Lower leg skin (tissue), 4 donors: ENCODE measurements at regions of chr20 and their contacts with region 1.

Region 1: GRCh38 chr20:20571068-20571780 is 141.2 kb downstream of the RALGAPA2 start:
- DNase-seq: no peak
- H3K4me3 ChIP-seq: no peak overlapping the region
- CTCF ChIP-seq: no peak
- POLR2A ChIP-seq: no peak

Region 2: DNA sequence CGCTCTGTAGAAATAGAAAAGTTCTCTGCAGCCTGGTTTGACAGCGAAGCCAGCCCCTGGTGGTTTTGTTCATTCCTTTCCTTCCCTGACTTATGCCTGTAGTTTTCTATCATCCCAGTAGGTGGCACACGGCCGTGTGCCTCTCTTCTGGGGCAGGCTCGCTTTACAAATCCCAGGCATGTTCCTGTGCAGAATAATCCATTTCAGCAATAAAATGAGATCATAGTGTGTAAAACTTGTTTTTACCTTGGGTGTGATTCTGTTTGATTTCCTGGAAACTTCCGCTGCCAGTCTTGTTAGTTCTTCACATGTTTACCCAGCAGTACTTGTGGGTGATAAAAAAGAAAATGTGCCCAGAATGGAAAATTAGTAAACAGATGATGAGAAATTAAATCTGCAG is 210.8 kb before region 1 on chr20:
- intact Hi-C with region 1: loop called (anchors 10 kb)
- DNase-seq: no peak
- H3K4me3 ChIP-seq: no peak overlapping the region
- CTCF ChIP-seq: no peak
- POLR2A ChIP-seq: no peak

Region 3: GRCh38 chr20:20489054-20489453 is 82.2 kb before region 1 on chr20:
- intact Hi-C with region 1: no loop called
- DNase-seq: no peak
- H3K4me3 ChIP-seq: no peak overlapping the region
- CTCF ChIP-seq: no peak
- POLR2A ChIP-seq: no peak

Region 4: DNA sequence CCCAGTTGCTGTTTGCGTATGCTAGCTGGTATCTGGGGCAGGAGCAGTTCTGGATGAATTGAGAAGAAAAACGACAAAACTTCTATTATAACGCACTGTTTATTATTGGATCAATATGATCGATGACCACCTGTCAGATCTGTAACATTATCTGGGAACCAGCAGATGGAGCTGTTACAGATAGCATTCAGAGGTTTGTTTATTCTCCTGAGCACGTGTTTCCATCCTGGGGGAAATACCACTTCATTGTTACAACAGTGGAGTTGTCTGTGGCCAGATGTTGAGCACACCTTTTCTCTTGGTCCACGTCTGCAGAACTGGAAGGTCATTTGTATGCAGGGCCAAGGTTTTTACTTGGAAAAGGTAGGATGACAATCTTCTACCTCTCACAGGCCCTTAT is 958.6 kb after region 1 on chr20:
- intact Hi-C with region 1: no loop called
- DNase-seq: no peak
- H3K4me3 ChIP-seq: no peak overlapping the region
- CTCF ChIP-seq: no peak
- POLR2A ChIP-seq: no peak